BJ (cell line): ENCODE measurements at regions of chr19 and their contacts with region 1.

Region 1: DNA sequence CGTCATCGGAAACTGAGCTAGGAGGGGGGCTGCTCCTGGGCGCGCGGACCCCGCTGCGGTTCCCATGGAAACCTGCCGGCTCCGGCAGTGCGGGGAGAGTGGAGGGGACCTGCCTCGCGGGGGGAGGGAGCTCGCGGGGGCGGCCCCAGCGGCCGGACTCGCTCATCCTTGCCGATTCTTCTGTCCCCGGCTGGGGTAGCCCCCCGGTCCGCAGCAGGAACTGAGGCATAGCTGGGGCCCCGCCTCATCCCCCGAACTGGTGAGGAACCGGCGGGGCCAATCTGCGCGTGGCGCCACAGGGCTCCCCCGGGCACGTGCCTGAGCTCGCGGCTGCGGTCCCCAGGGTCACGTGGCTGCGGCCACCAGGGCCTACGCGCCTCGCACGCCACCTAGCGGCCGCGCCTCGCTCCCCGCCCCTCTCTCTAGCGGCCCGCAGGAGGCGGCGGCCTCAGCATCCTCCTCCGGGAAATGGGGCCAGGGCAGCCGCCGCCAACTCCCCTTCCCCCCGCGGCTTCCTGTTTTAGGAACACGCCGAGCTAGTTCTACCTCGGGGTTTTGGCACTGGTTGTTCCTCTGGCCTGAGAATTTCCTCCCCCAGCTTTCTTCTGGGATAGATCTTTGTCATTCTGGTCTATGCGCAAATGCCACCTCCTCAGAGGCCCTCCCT is 1.7 kb upstream of the ELAVL3 start:
- DNase-seq: no peak
- H3K4me3 ChIP-seq: peak overlapping the region; percentile 50
- H3K27me3 ChIP-seq: peaks cover 16% of the 10 kb centered on the region
- CTCF ChIP-seq: peak; percentile 74

Region 2: DNA sequence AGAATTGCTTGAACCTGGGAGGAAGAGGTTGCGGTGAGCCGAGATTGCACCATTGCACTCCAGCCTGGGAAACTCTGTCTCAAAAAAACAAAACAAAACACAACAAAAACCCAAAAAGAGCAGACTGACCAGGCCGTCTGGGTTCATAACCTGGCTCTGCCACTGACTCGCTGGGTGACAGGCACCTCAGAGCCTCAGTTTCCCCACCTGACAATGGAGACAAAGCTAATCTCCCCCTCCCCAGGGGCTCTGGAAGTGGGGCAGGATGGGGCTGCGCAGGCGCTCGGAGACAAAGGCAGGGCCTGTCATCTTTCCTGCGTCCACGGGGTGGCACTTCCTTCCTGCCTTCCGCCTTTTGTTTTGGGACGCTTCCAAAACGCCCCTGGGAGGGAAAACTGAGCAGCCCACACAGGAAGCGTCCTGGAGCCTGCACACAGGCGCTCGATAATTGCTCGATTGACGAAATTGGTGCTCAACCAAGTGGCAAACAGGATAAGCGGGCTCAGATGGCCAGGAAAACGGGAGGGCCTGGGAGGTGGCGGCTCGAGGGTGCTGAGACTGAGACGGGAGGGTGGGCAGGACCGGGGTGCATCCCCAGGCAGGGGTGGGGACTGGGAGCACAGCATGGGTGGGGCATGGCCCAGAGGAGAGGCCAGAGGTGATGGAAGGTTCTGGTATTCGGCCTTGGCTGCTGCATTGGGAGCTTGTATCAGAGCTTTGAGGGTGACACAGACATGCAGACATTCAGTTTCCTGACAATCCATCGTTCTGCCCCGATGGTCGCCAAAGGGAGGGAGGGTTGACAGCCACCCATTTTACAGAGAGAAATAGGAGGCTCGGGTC is 344.8 kb before region 1 on chr19:
- CTCF ChIA-PET with region 1: interaction called, 13 read pairs
- POLR2A ChIA-PET with region 1: no interaction called
- DNase-seq: no peak
- H3K4me3 ChIP-seq: peak overlapping the region; percentile 24
- H3K27me3 ChIP-seq: no peaks in the 10 kb centered on the region
- CTCF ChIP-seq: peak; percentile 84

Region 3: GRCh38 chr19:11293433-11294389 is 188.8 kb before region 1 on chr19:
- CTCF ChIA-PET with region 1: interaction called, 28 read pairs
- POLR2A ChIA-PET with region 1: no interaction called
- DNase-seq: peak; percentile 54
- H3K4me3 ChIP-seq: peak overlapping the region; percentile 28
- H3K27me3 ChIP-seq: 0 out of 2 replicates have a peak, but pooled peaks cover 1% of the 10 kb centered on the region
- CTCF ChIP-seq: peak; percentile 100

Region 4: DNA sequence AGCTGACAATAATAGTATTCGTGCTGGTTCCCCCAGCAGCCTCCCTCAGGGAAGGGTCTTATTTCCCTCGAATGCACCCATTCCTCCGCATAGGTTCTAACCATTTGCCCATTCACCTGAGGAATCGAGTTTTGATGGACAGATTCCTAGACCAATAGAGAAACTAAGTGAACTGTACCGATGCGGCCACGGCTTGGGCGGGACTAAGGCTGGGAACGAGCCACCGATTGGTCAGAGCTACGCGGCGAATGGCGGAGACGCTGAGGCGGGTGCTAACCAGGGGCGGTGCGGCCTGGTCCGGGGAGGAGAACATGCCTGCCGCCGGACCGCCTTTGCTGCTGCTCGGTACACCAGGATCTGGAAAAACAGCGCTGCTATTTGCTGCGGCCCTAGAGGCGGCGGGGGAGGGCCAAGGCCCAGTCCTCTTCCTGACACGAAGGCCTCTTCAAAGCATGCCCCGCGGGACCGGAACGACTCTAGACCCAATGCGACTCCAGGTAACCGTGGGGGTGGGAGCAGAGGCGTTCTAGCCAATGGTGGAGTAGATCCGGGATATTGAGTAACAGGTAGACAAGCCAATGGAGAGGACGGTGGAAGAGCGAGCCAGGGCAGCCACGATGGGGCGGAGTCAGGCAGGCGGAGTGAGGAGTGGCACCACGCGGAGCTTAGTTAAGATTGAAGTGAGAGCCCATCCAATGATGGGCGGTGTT is 107.9 kb before region 1 on chr19 and contains the start of gene SWSAP1:
- CTCF ChIA-PET with region 1: interaction called, 21 read pairs
- POLR2A ChIA-PET with region 1: no interaction called
- DNase-seq: peak; percentile 98
- H3K4me3 ChIP-seq: peak within 1 kb of the TSS; percentile 63
- H3K27me3 ChIP-seq: no peaks in the 10 kb centered on the region
- CTCF ChIP-seq: no peak
- polyA plus RNA-seq, gene SWSAP1: 1.0 TPM in 2 replicates

Region 5: GRCh38 chr19:11435058-11435832 is 47.3 kb before region 1 on chr19 and contains the starts of genes ODAD3 and PRKCSH:
- CTCF ChIA-PET with region 1: no interaction called
- POLR2A ChIA-PET with region 1: no interaction called
- DNase-seq: peak; percentile 100
- H3K4me3 ChIP-seq: peak within 1 kb of the TSS; percentile 76
- H3K27me3 ChIP-seq: no peaks in the 10 kb centered on the region
- CTCF ChIP-seq: peak; percentile 88
- polyA plus RNA-seq, gene ODAD3: 0.16 and 0.38 TPM in 2 replicates
- polyA plus RNA-seq, gene PRKCSH: 137 and 348 TPM in 2 replicates

Region 6: DNA sequence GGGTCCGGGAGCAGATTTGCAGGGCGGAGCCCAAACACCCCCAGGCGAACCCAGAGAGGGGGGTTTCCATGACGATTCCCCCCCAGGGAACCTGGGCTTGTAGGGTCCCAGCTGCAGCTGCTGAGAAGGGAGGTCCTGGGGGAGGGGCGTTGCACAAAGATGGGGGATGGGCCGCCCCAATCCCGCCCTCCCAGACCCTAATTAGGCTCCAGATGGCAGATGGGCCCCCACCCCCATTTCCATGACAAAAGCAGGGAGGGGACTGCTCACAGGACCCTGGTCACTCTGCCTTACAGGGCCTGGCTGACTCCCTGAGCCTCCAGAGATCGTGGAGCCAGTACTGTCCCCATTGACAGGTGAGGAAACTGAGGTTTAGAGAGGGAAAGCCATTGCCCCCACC is 16.9 kb before region 1 on chr19:
- CTCF ChIA-PET with region 1: interaction called, 12 read pairs
- POLR2A ChIA-PET with region 1: interaction called, 3 read pairs
- DNase-seq: no peak
- H3K4me3 ChIP-seq: no peak overlapping the region
- H3K27me3 ChIP-seq: no peaks in the 10 kb centered on the region
- CTCF ChIP-seq: no peak